ENCODE measurements at regions of chr20 and their contacts with region 1.

Region 1: DNA sequence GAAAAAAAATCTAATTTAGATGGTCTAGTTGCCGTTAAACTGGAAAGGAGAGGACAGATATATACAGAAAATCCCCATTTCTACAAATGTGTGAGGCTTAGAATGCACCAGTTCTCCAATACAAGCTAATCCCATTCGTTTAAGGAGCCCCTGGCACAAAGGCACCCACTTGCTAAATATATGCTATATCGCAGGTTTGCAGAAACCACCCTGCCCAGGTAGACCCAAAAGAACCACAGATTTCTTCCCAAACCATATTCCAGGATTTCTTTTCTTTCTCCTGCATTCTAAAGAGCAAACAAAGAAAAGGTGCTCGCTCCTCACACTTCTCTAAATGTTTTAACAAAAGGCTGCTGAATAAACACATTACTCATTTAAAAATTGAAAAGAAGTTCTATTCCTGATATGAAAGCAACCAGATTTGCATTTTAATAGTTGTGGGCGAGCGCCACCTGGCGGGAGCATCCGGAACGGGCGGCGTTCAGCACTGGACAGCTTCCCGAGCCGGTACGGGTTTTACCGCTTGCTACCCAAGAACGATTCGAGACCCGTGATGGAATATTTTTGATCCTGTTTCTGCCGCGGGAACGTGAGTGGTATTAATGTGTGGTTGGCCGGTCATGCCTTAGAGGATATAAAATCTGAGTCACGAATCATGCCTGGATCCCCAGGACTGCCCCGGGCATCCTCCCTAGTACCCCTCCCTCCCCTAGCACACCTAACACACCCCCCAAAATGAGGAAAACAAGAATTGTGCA is 2.1 kb downstream of the PTPRT start:
- DNase-seq: peak; percentile 29
- H3K4me3 ChIP-seq: no peak overlapping the region
- H3K27ac ChIP-seq: no peak overlapping the region
- H3K4me1 ChIP-seq: no peaks in the 10 kb centered on the region
- H3K27me3 ChIP-seq: peaks cover 14% of the 10 kb centered on the region
- CTCF ChIP-seq: peak; percentile 83 to 92

Region 2: GRCh38 chr20:41693136-41693979 is 1494.3 kb before region 1 on chr20:
- CTCF ChIA-PET with region 1: no interaction called
- dilution Hi-C with region 1: no loop called
- in situ Hi-C with region 1: no loop called
- intact Hi-C with region 1: loop called (anchors 1 kb)
- DNase-seq: peak; percentile 73
- H3K4me3 ChIP-seq: peak overlapping the region; percentile 75 to 82 (median 76)
- H3K27ac ChIP-seq: peak overlapping the region; percentile 20
- H3K4me1 ChIP-seq: no peaks in the 10 kb centered on the region
- H3K27me3 ChIP-seq: no peaks in the 10 kb centered on the region
- CTCF ChIP-seq: peak; percentile 13 to 48

Region 3: GRCh38 chr20:41738604-41739206 is 1449.0 kb before region 1 on chr20:
- CTCF ChIA-PET with region 1: no interaction called
- dilution Hi-C with region 1: no loop called
- in situ Hi-C with region 1: loop called (anchors 10 to 25 kb)
- intact Hi-C with region 1: loop called (anchors 1 kb)
- DNase-seq: peak; percentile 11
- H3K4me3 ChIP-seq: no peak overlapping the region
- H3K27ac ChIP-seq: no peak overlapping the region
- H3K4me1 ChIP-seq: no peaks in the 10 kb centered on the region
- H3K27me3 ChIP-seq: no peaks in the 10 kb centered on the region
- CTCF ChIP-seq: peak; percentile 80 to 93

Region 4: GRCh38 chr20:41889126-41889870 is 1298.4 kb before region 1 on chr20:
- CTCF ChIA-PET with region 1: no interaction called
- dilution Hi-C with region 1: no loop called
- in situ Hi-C with region 1: no loop called
- intact Hi-C with region 1: loop called (anchors 10 kb)
- DNase-seq: no peak
- H3K4me3 ChIP-seq: no peak overlapping the region
- H3K27ac ChIP-seq: no peak overlapping the region
- H3K4me1 ChIP-seq: no peaks in the 10 kb centered on the region
- H3K27me3 ChIP-seq: no peaks in the 10 kb centered on the region
- CTCF ChIP-seq: peak in 1 of 2 donors; percentile 3

Region 5: GRCh38 chr20:43138061-43138860 is 49.4 kb before region 1 on chr20:
- CTCF ChIA-PET with region 1: no interaction called
- dilution Hi-C with region 1: no loop called
- in situ Hi-C with region 1: no loop called
- intact Hi-C with region 1: no loop called
- DNase-seq: no peak
- H3K4me3 ChIP-seq: no peak overlapping the region
- H3K27ac ChIP-seq: no peak overlapping the region
- H3K4me1 ChIP-seq: no peaks in the 10 kb centered on the region
- H3K27me3 ChIP-seq: no peaks in the 10 kb centered on the region
- CTCF ChIP-seq: no peak

Region 6: DNA sequence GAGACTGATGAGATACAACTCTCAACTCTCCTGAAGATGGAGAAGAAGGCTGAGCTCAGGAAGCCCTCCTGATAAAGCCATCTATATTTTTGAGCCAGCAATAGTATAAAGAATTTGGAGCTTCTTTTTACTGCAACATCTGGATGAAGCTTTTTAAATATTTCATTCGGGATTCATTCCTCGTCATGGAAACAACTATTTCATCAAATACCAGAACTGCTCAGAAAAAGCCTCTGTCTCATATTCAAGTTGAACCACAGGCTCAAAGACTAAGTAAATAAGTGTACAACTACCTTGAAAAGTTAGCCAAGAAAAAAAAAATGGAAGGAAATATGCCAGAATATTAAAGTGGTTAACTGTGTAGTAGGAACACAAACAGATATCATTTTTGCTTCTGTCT is 35.8 kb before region 1 on chr20:
- CTCF ChIA-PET with region 1: no interaction called
- dilution Hi-C with region 1: loop called (anchors 5 kb)
- in situ Hi-C with region 1: no loop called
- intact Hi-C with region 1: no loop called
- DNase-seq: no peak
- H3K4me3 ChIP-seq: no peak overlapping the region
- H3K27ac ChIP-seq: no peak overlapping the region
- H3K4me1 ChIP-seq: no peaks in the 10 kb centered on the region
- H3K27me3 ChIP-seq: no peaks in the 10 kb centered on the region
- CTCF ChIP-seq: no peak

Region 7: DNA sequence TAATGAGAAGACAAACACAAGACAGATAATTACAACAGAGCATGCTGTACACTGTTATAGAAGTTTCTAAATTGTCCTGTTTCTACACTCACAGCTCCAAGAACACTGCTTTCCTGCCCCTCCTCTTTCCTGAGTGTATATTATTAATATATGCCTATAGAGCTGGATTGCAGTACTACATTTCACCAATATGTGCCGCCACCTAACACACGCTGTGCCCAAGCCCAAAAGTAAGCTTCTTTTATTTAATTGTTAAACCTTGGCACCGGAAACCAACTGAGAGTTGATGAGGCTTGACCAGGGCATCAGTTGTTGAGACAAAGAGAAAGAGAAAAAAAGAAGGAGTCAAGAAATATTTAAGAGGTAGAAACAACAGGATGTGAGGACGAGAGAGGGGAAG is 18.0 kb after region 1 on chr20:
- CTCF ChIA-PET with region 1: no interaction called
- dilution Hi-C with region 1: no loop called
- in situ Hi-C with region 1: no loop called
- intact Hi-C with region 1: no loop called
- DNase-seq: no peak
- H3K4me3 ChIP-seq: no peak overlapping the region
- H3K27ac ChIP-seq: no peak overlapping the region
- H3K4me1 ChIP-seq: no peaks in the 10 kb centered on the region
- H3K27me3 ChIP-seq: no peaks in the 10 kb centered on the region
- CTCF ChIP-seq: no peak

Region 8: GRCh38 chr20:43408848-43409576 is 221.4 kb after region 1 on chr20:
- CTCF ChIA-PET with region 1: interaction called, 3 read pairs
- dilution Hi-C with region 1: no loop called
- in situ Hi-C with region 1: no loop called
- intact Hi-C with region 1: loop called (anchors 5 kb)
- DNase-seq: peak; percentile 24
- H3K4me3 ChIP-seq: no peak overlapping the region
- H3K27ac ChIP-seq: no peak overlapping the region
- H3K4me1 ChIP-seq: no peaks in the 10 kb centered on the region
- H3K27me3 ChIP-seq: no peaks in the 10 kb centered on the region
- CTCF ChIP-seq: peak; percentile 70 to 74